ENCODE measurements at regions of chr19 and their contacts with region 1.

Region 1: DNA sequence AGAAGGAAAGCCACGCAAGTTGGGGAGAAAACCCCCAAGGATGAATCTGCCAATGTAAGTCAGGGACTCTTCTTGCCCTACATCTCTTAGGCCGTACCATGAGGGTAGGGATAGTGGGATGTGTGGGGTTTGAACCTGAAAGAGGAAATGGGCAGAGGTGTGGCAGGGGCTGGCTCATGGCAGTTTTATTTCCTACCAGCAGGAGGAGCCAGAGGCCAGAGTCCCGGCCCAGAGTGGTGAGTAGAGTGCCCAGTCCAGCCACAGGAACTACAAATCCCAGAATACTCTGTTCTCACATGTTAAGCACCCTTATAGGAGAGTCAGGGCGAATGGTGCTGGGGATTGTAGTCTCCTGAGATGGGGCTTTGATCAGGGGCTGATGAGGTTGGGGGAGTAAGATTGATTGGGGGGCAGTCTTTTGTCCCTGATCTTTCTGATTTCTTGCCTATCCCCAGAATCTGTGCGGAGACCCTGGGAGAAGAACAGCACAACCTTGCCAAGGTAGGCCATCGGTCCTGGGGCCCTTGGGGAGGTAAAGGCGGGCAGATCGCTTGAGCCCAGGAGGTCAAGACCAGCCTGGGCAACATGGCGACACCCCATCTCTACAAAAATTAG is 16.5 kb downstream of the VASP start:
- DNase-seq: peak; percentile 75 to 76
- H3K4me3 ChIP-seq: no peak overlapping the region
- H3K27ac ChIP-seq: no peak overlapping the region
- H3K4me1 ChIP-seq: peaks cover 3 to 8% of the 10 kb centered on the region in 2 donors
- H3K27me3 ChIP-seq: no peaks in the 10 kb centered on the region
- CTCF ChIP-seq: peak; percentile 73 to 95 (median 93)
- POLR2A ChIP-seq: no peak

Region 2: DNA sequence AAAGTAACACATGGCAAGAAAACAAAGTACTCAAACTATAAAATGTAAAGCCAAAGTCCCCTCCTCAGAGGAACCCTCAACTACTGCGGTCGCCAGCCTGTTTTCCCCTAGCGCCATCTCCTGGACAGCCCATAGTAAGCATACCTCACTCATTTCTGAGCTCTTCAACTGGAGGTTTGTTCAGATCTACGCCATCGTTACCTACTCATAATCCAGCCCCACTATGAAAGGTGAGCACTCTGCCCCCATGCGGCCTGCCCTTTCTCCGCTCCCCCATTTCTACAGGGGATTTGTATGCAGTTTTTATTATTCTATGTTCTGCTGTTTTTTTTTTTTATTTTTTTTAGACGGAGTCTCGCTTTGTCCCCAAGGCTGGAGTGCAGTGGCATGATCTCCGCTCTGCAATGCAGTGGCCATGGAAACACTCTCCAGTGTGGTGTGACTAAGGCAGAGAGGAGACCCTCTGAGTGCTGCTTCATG is 34.7 kb after region 1 on chr19:
- intact Hi-C with region 1: loop called (anchors 5 kb)
- DNase-seq: peak; percentile 56 to 64
- H3K4me3 ChIP-seq: no peak overlapping the region
- H3K27ac ChIP-seq: no peak overlapping the region
- H3K4me1 ChIP-seq: no peaks in the 10 kb centered on the region
- H3K27me3 ChIP-seq: no peaks in the 10 kb centered on the region
- CTCF ChIP-seq: peak; percentile 25 to 81 (median 54)
- POLR2A ChIP-seq: no peak

Region 3: GRCh38 chr19:45643024-45643926 is 119.5 kb after region 1 on chr19:
- intact Hi-C with region 1: loop called (anchors 5 kb)
- DNase-seq: peak; percentile 80 to 81
- H3K4me3 ChIP-seq: no peak overlapping the region
- H3K27ac ChIP-seq: no peak overlapping the region
- H3K4me1 ChIP-seq: peaks cover 17 to 43% of the 10 kb centered on the region in 2 donors
- H3K27me3 ChIP-seq: peaks cover 12% of the 10 kb centered on the region
- CTCF ChIP-seq: peak; percentile 95 to 99 (median 97)
- POLR2A ChIP-seq: no peak

Region 4: GRCh38 chr19:45681391-45682015 is 157.8 kb after region 1 on chr19:
- intact Hi-C with region 1: loop called (anchors 10 kb)
- DNase-seq: peak; percentile 86 to 88
- H3K4me3 ChIP-seq: peak overlapping the region in 1 of 3 donors; percentile 28
- H3K27ac ChIP-seq: peak overlapping the region; percentile 64 to 84 (median 67)
- H3K4me1 ChIP-seq: peaks cover 7 to 25% of the 10 kb centered on the region in 2 donors
- H3K27me3 ChIP-seq: no peaks in the 10 kb centered on the region
- CTCF ChIP-seq: peak; percentile 76 to 97 (median 94)
- POLR2A ChIP-seq: peak in 1 of 2 donors; percentile 54

Region 5: DNA sequence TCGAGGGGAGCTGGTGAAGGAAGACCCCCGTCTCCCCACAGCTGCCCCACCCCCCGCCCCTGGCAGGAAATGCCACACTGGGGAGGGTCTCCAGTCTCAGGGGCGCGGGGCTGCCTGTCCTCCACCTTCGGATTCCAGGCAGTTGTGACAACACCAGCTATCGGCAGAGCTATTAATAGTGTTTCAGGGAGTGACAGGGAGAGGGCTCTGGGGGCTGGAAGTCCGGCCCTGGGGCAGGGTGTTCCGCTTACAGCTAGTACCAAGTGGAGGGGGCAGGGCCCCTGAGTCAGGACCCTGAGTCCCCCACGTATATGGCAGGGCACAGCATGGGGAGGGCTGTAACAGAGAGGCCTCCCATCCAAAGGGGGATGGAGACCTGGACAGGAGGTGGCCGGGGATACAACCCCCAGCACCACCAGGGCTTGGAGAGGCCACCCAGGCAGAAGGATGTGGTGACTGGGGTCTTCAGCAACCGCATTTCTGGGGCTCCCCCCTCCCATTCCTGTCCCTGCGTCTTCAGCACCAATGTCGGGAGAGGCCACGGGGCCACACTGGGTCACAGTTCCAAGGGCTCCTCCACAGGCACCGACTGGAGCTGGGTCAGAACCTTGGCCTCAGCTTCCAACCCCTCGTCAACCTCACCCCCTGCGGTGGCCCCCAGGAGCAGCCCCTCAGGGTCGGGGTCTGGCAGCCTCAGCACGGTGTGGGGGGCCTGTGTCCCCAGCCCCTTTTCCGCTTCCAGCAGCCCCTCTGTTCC is 241.4 kb after region 1 on chr19:
- intact Hi-C with region 1: no loop called
- DNase-seq: no peak
- H3K4me3 ChIP-seq: no peak overlapping the region
- H3K27ac ChIP-seq: peak overlapping the region; percentile 54 to 73 (median 59)
- H3K4me1 ChIP-seq: peaks cover 33 to 37% of the 10 kb centered on the region in 2 donors
- H3K27me3 ChIP-seq: no peaks in the 10 kb centered on the region
- CTCF ChIP-seq: no peak
- POLR2A ChIP-seq: no peak

Measured in thyroid gland (tissue), 4 donors.